ENCODE measurements at regions of chr6 and their contacts with region 1.

Region 1: DNA sequence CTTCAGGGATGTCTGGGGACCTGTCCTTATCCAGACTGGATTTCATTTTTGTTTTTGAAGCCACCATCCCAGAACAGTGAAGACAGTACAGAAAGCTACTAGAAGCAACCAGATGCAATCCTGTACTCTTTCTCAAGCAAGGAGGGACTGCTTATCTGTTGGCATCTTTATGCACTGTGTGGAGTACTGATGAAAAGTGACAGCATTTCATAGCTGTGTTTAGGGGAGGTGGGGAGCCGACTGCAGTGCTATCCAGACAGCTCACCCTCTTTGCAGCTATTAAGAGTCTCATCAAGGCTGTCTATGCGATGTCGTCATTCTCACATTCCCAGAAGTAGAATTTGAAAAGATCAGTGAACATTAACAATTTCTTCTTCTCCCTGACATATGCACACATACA is 5.5 kb downstream of the ZDHHC14 start:
- DNase-seq: no peak
- ATAC-seq: no peak
- H3K4me3 ChIP-seq: no peak overlapping the region
- H3K27ac ChIP-seq: no peak overlapping the region
- H3K4me1 ChIP-seq: peaks cover 0 to 28% (median 17%) of the 10 kb centered on the region in 9 donors
- H3K27me3 ChIP-seq: no peaks in the 10 kb centered on the region
- CTCF ChIP-seq: no peak

Region 2: DNA sequence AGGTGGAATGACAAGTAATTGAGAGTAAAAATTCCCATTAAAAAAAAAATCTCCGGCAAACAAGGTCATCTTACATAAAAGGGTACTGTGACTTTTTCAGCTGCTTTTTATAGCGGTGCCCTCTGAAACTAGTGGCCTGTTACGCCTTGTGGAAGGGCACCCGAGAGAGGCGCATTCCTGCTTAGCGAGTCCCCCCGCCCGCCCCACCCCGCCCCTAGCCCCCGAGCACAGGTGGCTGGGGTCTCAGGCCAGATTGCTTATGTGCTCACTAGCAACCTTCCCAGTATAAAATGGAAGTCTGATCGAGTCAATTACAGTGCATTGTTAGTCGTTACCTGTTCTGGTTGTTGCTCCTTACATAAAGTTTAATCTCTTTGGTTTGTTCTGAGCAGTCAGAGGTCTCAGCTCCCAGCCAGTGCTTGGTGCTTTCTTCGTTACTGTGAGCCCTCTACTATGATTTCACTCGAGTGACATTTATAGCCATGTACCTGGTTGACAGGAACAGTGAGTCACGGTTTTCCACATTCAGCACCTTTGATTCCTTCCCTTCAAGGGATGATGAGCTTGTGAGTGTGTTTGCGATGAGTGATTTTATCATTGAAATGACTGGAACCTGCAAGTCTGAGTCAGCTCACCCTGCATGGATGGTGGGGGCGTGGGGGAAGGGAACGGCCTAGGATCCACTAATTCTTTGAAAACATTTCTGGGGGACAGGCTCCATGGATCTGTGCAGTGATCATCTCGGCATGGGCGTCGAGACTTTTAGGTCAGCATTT is 42.2 kb after region 1 on chr6:
- intact Hi-C with region 1: loop called in 3 of 10 experiments (anchors 2 to 5 kb)
- DNase-seq: no peak
- ATAC-seq: peak in 4 of 8 donors; percentile 11 to 34 (median 26)
- H3K4me3 ChIP-seq: peak overlapping the region in 2 of 10 donors; percentile 3 to 18
- H3K27ac ChIP-seq: peak overlapping the region; percentile 30 to 91 (median 78)
- H3K4me1 ChIP-seq: peaks cover 0 to 88% (median 36%) of the 10 kb centered on the region in 9 donors
- H3K27me3 ChIP-seq: no peaks in the 10 kb centered on the region
- CTCF ChIP-seq: no peak

Measured in heart right ventricle (tissue), 16 donors.